CD4-positive, alpha-beta memory T cell (primary cell): ENCODE measurements at regions of chr11 and their contacts with region 1.

Region 1: DNA sequence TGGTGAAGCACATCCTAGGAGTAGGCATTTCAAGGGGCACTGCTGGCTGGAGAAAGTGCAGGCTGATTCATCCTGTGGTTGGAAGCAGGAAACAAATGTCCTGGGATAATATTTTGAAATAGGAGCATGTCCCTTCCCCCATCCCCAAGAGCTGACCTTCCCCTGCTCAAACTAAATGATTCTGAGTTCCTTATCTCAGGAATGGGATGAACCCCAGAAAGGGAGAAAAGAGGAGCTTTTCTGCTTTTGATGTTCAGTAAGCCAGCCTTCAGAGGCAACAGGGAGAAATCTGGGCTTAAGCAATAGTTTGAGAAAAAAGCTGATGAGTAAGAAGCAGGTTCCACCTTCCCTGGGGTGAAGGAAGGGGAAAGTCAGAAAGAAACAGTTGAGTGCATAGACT is 19.5 kb upstream of the SPON1 start:
- DNase-seq: no peak
- H3K4me3 ChIP-seq: no peak overlapping the region
- H3K4me3 Mint-ChIP-seq: no peak overlapping the region
- H3K27ac ChIP-seq: no peak overlapping the region
- H3K27ac Mint-ChIP-seq: peak overlapping the region in 2 of 7 donors; percentile 9 to 32
- H3K4me1 ChIP-seq: peaks cover 56% of the 10 kb centered on the region
- H3K4me1 Mint-ChIP-seq: peaks cover 40 to 59% (median 48%) of the 10 kb centered on the region in 4 donors
- H3K27me3 ChIP-seq: no peaks in the 10 kb centered on the region
- H3K27me3 Mint-ChIP-seq: no peaks in the 10 kb centered on the region

Region 2: DNA sequence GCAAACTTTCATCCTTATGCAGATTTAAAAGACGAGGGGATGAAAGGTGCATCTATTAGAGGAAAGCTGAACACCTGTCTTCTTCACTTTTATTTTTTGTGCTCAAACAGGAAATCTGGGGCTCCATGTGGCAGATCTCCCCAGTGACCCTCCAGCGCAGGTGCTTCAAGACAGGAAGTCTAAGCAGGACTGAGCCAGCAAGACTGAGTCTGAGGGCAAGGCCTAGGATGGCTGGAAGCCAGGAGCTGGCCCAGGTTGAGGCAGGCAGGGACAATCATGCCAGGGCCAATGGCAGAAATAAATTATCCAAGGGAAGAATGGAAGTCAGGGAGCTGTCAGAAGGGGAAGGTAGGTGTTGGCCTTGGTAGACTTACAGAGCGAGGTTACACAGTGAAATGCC is 81.6 kb before region 1 on chr11:
- CTCF ChIA-PET with region 1: interaction called, 4 read pairs
- POLR2A ChIA-PET with region 1: interaction called, 7 read pairs
- intact Hi-C with region 1: loop called (anchors 2 kb)
- DNase-seq: peak in 3 of 5 donors; percentile 16 to 25 (median 24)
- H3K4me3 ChIP-seq: no peak overlapping the region
- H3K4me3 Mint-ChIP-seq: peak overlapping the region in 7 of 8 donors; percentile 2 to 64 (median 33)
- H3K27ac ChIP-seq: no peak overlapping the region
- H3K27ac Mint-ChIP-seq: peak overlapping the region; percentile 37 to 90 (median 83)
- H3K4me1 ChIP-seq: peaks cover 23% of the 10 kb centered on the region
- H3K4me1 Mint-ChIP-seq: peaks cover 18 to 35% (median 31%) of the 10 kb centered on the region in 4 donors
- H3K27me3 ChIP-seq: no peaks in the 10 kb centered on the region
- H3K27me3 Mint-ChIP-seq: no peaks in the 10 kb centered on the region

Region 3: DNA sequence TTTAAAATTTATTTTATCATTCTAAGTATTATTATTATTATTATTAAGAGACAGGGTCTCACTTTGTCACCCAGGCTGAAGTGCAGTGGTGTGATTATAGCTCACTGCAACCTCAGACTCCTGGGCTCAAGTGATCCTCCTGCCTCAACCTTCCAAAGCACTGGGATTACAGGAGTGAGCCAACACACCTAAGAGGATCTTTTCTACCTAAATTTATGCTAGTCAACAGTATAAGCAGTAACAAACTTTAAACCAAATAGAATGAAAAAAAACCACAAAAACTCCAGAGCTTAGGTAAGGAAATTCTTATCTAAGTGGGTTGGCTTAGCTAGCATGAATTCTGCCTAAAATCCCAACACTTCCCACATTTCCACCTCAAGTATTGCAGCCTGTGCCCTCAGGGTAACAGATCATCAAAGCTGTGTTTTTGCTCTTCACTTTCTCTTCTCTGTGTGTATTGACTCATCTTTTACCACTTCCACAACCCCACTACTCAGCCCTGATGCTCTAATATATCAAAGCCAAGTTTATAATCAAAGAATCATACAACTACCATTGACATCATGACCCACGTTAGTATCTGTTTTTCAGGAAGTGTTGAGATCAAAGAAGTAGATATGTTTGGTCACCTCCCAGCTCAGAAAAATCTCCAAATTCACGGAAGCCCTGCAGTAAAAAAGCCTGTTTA is 74.1 kb before region 1 on chr11:
- CTCF ChIA-PET with region 1: interaction called, 5 read pairs
- POLR2A ChIA-PET with region 1: interaction called, 44 read pairs
- intact Hi-C with region 1: loop called (anchors 1 kb)
- DNase-seq: peak; percentile 80 to 91 (median 84)
- H3K4me3 ChIP-seq: no peak overlapping the region
- H3K4me3 Mint-ChIP-seq: peak overlapping the region in 7 of 8 donors; percentile 1 to 56 (median 43)
- H3K27ac ChIP-seq: peak overlapping the region; percentile 55
- H3K27ac Mint-ChIP-seq: peak overlapping the region; percentile 77 to 97 (median 96)
- H3K4me1 ChIP-seq: peaks cover 32% of the 10 kb centered on the region
- H3K4me1 Mint-ChIP-seq: peaks cover 30 to 49% (median 35%) of the 10 kb centered on the region in 4 donors
- H3K27me3 ChIP-seq: no peaks in the 10 kb centered on the region
- H3K27me3 Mint-ChIP-seq: no peaks in the 10 kb centered on the region

Region 4: GRCh38 chr11:13889552-13890249 is 53.3 kb before region 1 on chr11:
- CTCF ChIA-PET with region 1: no interaction called
- POLR2A ChIA-PET with region 1: no interaction called
- intact Hi-C with region 1: no loop called
- DNase-seq: no peak
- H3K4me3 ChIP-seq: no peak overlapping the region
- H3K4me3 Mint-ChIP-seq: no peak overlapping the region
- H3K27ac ChIP-seq: no peak overlapping the region
- H3K27ac Mint-ChIP-seq: peak overlapping the region in 1 of 7 donors; percentile 37
- H3K4me1 ChIP-seq: no peaks in the 10 kb centered on the region
- H3K4me1 Mint-ChIP-seq: peaks cover 0 to 7% (median 5%) of the 10 kb centered on the region in 4 donors
- H3K27me3 ChIP-seq: no peaks in the 10 kb centered on the region
- H3K27me3 Mint-ChIP-seq: no peaks in the 10 kb centered on the region

Region 5: DNA sequence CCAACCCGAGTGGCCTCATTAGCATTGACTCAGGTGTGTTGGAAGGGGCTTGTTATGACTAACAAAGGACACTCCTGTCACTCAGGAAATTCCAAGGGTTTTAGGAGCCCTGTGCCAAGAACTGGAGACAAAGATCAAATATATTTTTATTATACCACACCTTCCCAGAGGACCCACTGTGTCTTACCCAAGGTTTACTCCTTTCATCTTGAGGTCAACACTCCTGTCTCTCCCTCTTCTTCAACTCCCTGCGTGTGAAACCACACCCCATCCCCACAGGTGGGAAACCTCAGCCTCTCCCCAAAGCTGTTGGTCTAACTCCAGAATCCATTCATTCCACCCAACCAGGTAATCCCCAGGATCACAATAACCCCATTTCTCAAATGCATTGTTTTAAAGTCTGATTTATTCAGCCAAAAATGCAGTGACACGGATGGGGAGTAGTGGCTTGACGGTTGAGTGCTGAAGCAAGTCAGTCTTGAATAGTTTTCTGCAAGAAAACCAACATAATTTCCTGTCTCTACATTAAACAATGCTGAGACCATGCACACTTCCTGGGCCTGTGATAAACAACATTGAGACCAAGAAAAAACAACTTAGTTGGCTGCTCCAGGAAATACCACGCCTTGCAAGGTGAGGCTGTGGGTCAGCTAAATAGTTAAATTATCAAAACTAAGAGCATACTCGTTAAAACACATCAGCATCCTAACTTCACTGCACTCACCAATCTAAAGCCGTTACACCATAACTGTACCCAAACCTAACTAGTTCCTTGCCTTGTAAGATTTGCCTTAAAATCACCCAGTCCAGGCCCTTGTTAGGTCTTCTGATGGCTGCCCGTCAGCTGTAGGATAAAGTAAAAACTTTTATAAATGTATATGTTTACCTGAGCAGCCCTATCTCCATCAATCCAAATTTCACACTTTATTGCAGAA is 19.0 kb before region 1 on chr11:
- CTCF ChIA-PET with region 1: interaction called, 35 read pairs
- POLR2A ChIA-PET with region 1: interaction called, 76 read pairs
- intact Hi-C with region 1: loop called (anchors 2 kb)
- DNase-seq: peak; percentile 37 to 66 (median 50)
- H3K4me3 ChIP-seq: peak overlapping the region in 1 of 2 donors; percentile 31
- H3K4me3 Mint-ChIP-seq: peak overlapping the region; percentile 15 to 92 (median 84)
- H3K27ac ChIP-seq: peak overlapping the region; percentile 46
- H3K27ac Mint-ChIP-seq: peak overlapping the region; percentile 95 to 99 (median 96)
- H3K4me1 ChIP-seq: peaks cover 59% of the 10 kb centered on the region
- H3K4me1 Mint-ChIP-seq: peaks cover 54 to 85% (median 65%) of the 10 kb centered on the region in 4 donors
- H3K27me3 ChIP-seq: no peaks in the 10 kb centered on the region
- H3K27me3 Mint-ChIP-seq: no peaks in the 10 kb centered on the region

Region 6: DNA sequence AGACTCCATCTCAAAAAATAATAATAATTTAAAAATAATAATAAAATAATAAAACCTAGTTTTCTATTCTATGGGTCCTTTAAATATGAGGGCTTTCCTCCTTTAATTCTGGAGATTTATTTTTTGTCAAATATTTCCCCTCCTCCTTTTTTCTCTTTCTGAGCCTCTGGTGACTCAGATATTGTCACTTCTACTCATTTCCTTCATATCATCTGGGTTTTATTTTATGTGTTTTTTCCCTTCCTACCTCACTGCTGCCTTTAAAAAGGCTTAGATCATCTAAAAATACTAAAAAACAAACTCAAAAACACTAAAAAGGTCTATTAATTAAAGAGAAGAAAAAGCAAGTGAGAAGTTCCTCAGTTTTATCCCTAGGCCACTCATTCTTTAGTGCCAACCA is 158.4 kb after region 1 on chr11:
- CTCF ChIA-PET with region 1: no interaction called
- POLR2A ChIA-PET with region 1: no interaction called
- intact Hi-C with region 1: no loop called
- DNase-seq: no peak
- H3K4me3 ChIP-seq: no peak overlapping the region
- H3K4me3 Mint-ChIP-seq: no peak overlapping the region
- H3K27ac ChIP-seq: no peak overlapping the region
- H3K27ac Mint-ChIP-seq: peak overlapping the region in 1 of 7 donors; percentile 39
- H3K4me1 ChIP-seq: no peaks in the 10 kb centered on the region
- H3K4me1 Mint-ChIP-seq: peaks cover 0 to 2% (median 0%) of the 10 kb centered on the region in 4 donors
- H3K27me3 ChIP-seq: no peaks in the 10 kb centered on the region
- H3K27me3 Mint-ChIP-seq: no peaks in the 10 kb centered on the region

Region 7: GRCh38 chr11:14114269-14114668 is 171.3 kb after region 1 on chr11:
- CTCF ChIA-PET with region 1: no interaction called
- POLR2A ChIA-PET with region 1: no interaction called
- intact Hi-C with region 1: no loop called
- DNase-seq: no peak
- H3K4me3 ChIP-seq: no peak overlapping the region
- H3K4me3 Mint-ChIP-seq: no peak overlapping the region
- H3K27ac ChIP-seq: no peak overlapping the region
- H3K27ac Mint-ChIP-seq: peak overlapping the region in 1 of 7 donors; percentile 24
- H3K4me1 ChIP-seq: no peaks in the 10 kb centered on the region
- H3K4me1 Mint-ChIP-seq: peaks cover 4 to 7% (median 6%) of the 10 kb centered on the region in 4 donors
- H3K27me3 ChIP-seq: no peaks in the 10 kb centered on the region
- H3K27me3 Mint-ChIP-seq: peaks cover 0 to 1% of the 10 kb centered on the region in 2 donors

Region 8: GRCh38 chr11:14148653-14149273 is 205.8 kb after region 1 on chr11:
- CTCF ChIA-PET with region 1: interaction called, 15 read pairs
- POLR2A ChIA-PET with region 1: no interaction called
- intact Hi-C with region 1: no loop called
- DNase-seq: peak in 4 of 5 donors; percentile 39 to 51 (median 42)
- H3K4me3 ChIP-seq: no peak overlapping the region
- H3K4me3 Mint-ChIP-seq: no peak overlapping the region
- H3K27ac ChIP-seq: no peak overlapping the region
- H3K27ac Mint-ChIP-seq: peak overlapping the region in 1 of 7 donors; percentile 10
- H3K4me1 ChIP-seq: no peaks in the 10 kb centered on the region
- H3K4me1 Mint-ChIP-seq: peaks cover 0 to 4% (median 1%) of the 10 kb centered on the region in 4 donors
- H3K27me3 ChIP-seq: no peaks in the 10 kb centered on the region
- H3K27me3 Mint-ChIP-seq: no peaks in the 10 kb centered on the region